ENCODE measurements at regions of chr10 and their contacts with region 1.

Region 1: DNA sequence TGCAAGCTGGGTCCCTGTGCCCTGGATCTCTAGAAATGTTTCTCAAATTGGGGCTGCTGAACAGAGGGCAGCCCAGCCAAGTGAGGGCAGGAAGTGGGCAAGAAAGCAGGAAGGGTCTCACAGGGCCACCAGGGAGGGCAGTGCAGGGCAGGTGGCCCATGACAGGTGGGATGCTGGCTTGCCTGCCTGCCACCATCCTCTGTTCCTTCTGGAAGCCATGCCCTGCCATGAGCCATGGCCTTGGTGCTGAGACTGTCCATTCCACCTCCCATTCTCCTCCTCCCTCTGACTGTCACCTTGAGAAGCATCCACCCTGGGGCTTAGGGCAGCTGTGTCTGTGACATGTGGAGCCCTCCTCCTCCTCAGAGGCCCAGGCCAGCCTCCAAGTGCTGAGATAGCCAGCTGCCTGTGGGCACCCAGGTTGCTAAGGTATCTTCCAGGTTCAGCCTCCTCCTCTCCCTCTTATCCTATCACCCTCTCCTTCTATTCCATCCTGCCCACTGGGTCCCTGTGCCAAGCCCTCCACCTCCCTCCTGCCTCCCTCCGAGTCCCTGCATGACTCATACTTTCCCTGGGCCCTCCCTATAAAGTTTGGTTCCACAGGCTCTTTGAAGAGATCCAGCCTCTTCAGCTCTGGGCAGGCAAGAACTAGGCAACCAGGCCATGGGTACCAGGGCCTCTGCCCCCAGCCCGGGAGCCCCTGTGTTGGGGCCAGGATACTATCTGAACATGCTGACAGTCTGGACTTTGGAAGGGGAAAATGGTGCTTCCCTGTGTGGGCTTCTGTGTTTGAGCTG is 1.3 kb downstream of the VSIR start:
- DNase-seq: no peak
- H3K4me3 Mint-ChIP-seq: peak overlapping the region; percentile 84
- H3K27ac Mint-ChIP-seq: peak overlapping the region; percentile 90
- H3K4me1 Mint-ChIP-seq: peaks cover 82% of the 10 kb centered on the region
- H3K27me3 Mint-ChIP-seq: no peaks in the 10 kb centered on the region

Region 2: DNA sequence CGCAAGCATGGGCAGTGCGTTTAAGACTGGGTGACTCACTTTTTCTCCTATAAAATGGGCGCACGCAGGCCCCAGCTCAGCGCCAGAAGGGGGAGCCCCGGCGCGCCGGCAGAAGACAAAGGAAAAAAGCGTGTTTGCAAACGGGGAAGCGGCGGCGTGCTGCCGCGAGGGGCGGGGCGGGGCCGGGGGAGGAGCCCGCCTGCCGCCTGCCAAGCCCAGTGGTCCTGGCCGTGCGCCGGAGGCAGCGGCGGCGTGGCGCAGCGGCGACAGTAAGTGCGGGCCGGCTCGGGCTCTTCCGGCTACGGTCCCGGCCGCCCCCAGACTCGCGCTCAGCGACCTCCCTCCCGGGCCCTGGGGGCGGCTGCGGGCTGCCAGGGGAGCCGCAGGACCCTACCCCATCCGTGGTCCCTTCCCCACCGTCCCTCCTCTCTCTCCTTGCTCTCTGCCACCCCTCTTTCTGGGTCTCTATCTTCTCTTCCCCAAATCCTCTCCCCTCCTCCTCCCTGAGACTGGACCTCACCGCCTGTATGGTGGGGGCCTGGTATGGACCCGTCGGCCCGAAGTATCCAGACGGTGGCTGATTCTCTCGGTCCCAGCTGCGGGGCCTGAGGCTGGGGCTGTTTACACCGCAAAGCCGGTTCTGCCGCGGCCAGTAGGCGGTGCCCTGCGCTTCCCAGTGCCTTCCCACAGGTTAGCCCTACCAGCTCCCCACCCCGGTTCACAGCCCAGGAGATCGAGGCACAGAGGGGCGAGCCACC is 452.8 kb before region 1 on chr10 and contains the start of gene SLC29A3:
- intact Hi-C with region 1: loop called (anchors 1 kb)
- DNase-seq: peak; percentile 81
- H3K4me3 Mint-ChIP-seq: peak within 1 kb of the TSS; percentile 96
- H3K27ac Mint-ChIP-seq: peak within 1 kb of the TSS; percentile 83
- H3K4me1 Mint-ChIP-seq: peaks cover 23% of the 10 kb centered on the region
- H3K27me3 Mint-ChIP-seq: peaks cover 1% of the 10 kb centered on the region
- total RNA-seq, gene SLC29A3: 6.6 and 6.8 TPM in 2 replicates

Region 3: GRCh38 chr10:71383972-71384687 is 387.9 kb before region 1 on chr10:
- intact Hi-C with region 1: loop called (anchors 1 kb)
- DNase-seq: peak; percentile 57
- H3K4me3 Mint-ChIP-seq: no peak overlapping the region
- H3K27ac Mint-ChIP-seq: no peak overlapping the region
- H3K4me1 Mint-ChIP-seq: no peaks in the 10 kb centered on the region
- H3K27me3 Mint-ChIP-seq: peaks cover 20% of the 10 kb centered on the region

Region 4: DNA sequence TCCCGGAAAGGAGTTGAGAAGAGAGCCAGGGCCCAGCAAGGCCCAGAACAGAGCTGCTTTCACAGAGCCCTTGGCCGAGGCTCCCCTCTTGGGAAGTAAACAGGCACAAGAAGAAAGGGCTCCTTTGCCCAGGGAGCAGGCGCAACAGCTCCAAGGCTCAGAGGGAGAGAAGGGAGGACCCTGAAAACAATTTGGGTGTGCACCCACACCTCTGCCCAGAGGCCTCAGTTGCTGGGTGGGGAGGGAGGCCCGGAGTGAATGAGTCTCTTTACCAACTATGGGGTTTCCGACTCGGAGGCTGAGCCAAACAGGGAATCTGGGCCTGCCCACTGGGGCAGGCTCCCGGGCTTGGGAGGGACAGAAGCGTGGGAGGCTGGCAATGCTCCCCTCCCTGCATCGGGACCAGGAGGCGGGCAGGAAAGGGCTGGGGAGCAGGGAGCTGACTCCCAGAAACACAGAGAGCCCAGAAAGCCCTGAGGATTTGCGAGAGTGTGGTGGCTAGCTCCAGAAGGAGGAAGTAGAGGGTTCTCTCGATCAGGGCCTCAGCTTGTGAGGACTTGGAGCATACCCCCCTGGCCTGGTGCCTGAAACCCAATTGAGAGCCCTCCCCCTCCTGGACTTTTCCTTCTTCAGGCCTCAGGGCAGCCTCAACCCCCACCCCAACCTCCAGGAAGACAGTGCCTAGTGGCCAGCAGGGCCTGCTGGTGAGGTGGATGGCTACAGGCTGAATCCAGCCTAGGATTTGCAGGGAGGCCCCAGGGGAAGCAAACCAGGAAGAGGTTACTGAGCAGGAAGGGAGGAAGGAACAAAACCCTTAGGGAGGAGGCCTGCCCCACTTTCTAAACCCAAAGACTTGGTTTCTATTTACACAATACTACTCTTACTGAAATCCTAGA is 58.6 kb before region 1 on chr10:
- intact Hi-C with region 1: loop called (anchors 5 kb)
- DNase-seq: no peak
- H3K4me3 Mint-ChIP-seq: peak overlapping the region; percentile 63
- H3K27ac Mint-ChIP-seq: peak overlapping the region; percentile 96
- H3K4me1 Mint-ChIP-seq: peaks cover 45% of the 10 kb centered on the region
- H3K27me3 Mint-ChIP-seq: no peaks in the 10 kb centered on the region

Region 5: DNA sequence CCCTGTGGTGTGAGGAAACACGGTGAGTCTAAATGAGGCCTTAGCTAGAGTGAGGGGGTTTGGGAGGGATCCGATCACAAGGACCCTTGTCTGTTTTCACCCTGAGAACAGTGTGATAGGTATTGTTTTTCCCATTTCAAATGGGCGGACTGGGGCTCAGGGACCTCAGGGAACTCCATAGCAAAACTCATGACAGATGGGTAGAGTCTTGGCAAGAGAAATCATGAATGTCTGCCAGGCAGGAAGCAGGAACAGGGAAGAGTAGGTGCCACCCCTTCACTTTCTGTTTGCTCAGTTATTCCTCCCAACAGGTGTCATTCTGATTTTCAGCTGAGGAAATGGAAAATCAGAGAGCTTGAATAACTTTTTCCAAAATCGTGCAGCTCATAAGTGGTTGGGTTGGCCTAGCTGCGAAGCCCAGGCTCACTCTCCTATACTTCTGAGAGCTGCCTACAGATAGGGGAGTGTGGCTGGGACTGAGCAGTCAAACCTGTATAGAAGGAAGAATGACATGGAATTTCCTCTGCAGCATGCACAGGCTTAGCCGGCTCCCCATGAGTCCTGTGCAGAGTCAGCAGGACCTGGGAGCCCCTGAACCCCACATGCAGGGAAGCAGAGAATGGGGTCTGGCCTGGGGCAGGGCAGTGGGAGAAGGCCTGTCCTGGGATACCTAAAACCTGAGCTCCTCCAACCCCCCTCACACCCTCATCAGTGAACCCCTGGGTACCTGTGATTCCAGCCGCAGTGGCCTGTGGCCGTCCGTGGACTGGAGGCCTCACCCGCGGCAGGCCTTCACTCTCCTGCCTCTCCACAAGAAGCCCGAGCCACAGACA is 34.8 kb before region 1 on chr10:
- intact Hi-C with region 1: loop called (anchors 1 kb)
- DNase-seq: no peak
- H3K4me3 Mint-ChIP-seq: peak overlapping the region; percentile 16
- H3K27ac Mint-ChIP-seq: peak overlapping the region; percentile 94
- H3K4me1 Mint-ChIP-seq: peaks cover 85% of the 10 kb centered on the region
- H3K27me3 Mint-ChIP-seq: no peaks in the 10 kb centered on the region

Region 6: DNA sequence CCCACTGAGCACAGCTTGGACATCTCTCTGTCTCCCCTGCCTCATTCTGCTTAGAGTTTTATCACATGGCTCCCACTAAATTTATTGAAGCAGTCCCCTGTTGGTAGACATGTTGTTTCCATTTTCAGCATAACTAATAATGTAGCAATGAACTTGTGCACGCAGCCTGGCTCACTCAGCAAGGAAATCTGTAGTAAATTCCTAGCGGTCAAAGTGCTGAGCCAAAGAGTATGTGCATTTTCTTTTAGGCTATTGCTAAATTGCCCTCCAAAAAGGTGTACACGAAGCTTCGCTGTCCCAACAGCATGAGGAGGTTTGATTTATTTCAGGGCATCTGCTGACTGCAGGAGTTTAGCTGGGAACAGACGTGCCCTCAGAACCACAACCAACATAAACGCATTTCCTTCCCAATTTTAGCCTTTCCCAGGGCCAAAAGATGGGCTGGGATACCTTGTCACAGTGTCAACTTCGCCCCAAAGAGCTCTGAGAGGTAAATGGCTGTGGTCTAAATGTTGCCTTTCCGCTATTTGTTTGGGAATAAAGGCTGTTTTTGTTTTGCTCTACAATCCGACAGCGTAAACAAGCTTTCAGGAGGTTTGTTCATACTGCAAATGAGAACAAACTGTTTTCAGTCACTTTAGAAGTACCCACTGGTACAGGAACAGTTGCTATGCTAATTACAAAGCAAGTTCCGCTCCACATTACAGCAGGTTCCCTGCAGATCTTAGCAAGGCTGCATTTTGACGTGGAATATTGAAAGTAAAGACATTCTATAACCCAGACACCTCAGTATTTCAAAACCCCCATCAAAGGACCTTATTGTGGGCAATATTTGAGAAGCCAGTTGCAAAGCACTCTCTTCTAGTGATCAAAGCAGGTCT is 15.5 kb before region 1 on chr10:
- intact Hi-C with region 1: loop called (anchors 1 kb)
- DNase-seq: no peak
- H3K4me3 Mint-ChIP-seq: peak overlapping the region; percentile 70
- H3K27ac Mint-ChIP-seq: peak overlapping the region; percentile 94
- H3K4me1 Mint-ChIP-seq: peaks cover 82% of the 10 kb centered on the region
- H3K27me3 Mint-ChIP-seq: no peaks in the 10 kb centered on the region

Region 7: DNA sequence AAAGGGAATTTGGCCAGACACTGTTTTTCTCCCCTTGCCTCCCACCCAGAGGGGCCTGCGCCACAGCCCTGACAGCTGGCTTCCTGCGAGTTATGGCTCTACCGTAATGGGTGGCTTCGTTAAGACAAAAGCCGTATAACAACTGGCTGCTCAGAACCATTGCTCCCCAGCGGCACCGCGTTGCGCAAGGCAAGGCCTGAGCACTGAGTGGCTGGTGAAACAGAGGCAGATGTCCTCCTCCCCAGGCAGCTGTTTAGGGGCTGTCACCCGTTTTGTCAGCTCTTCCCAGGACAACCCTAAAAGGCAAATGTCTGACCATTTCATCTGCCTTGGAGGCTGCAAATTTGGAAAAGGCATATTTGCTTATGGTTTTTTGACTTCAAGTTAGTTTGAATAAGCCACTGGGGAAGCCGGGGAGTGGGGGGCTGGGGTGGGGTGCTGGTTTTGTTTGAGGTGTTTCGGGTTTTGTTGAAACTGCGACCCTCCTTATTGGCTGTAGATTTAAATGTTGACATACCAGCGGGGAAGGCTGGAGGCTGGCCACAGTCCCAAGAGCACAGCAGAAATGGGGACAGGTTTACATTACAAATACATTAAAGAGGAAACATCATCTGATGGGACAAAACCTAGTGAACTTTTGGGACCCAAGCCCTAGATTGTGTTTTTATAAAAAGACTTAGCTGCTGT is 317.0 kb after region 1 on chr10:
- intact Hi-C with region 1: loop called (anchors 10 kb)
- DNase-seq: peak; percentile 47
- H3K4me3 Mint-ChIP-seq: peak overlapping the region; percentile 99
- H3K27ac Mint-ChIP-seq: peak overlapping the region; percentile 99
- H3K4me1 Mint-ChIP-seq: peaks cover 62% of the 10 kb centered on the region
- H3K27me3 Mint-ChIP-seq: no peaks in the 10 kb centered on the region

Measured in activated T-helper 1 cell treated with anti-CD3 and anti-CD28 coated beads, Interleukin-12 subunit alpha, Interleukin-12 subunit beta, Interleukin-2, Interleukin-4 antibody, amounts not matched to agents 30 ng/mL and 10 ng/mL and 1 ng/mL, durations not matched to agents 14 hours and 24 hours and 36 hours (primary cell).